ENCODE measurements at regions of chr1 and their contacts with region 1.

Region 1: DNA sequence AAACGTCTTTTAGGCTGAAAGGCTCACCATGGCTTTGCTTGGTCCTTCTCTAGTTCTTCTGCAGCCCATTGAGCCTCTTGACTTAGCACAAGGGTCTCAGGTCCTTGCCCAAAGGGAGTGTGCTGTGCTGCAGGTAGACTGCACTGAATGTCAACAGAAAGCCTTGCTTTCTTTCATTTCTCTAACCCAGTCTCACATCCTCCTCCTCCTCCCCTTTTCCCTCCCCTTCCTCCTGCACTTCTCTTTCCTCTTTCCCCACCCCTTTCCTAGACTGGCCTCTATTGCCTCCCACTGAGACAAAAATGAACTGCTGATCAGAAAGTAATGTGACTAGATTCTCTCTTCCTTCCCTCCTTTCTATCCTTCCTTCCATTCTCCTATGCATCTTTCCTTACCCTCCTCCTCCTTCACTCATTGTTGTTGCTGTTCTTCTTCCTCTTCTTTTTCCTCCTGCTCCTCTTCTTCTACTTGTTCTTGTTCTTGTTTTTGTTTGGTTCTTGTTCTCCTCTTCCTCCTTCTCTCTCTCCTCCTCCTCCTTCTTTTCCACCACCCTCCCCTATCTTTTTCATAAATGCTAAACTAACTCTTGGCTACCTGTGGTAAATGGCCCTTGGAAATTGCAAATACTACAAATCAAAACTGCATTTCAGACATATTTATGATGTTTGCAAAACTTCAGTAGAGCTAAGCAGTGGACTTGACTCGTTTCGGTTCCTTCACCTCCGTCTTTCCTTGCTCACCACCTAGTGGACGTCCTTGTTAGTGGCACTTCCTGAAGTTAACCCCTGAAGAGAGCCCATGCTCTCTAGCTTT is at the start of gene SELL:
- DNase-seq: peak; percentile 83
- H3K4me3 ChIP-seq: peak within 1 kb of the TSS; percentile 56
- H3K27ac ChIP-seq: peak within 1 kb of the TSS; percentile 24
- H3K4me1 ChIP-seq: peaks cover 11% of the 10 kb centered on the region
- CTCF ChIP-seq: peak; percentile 97
- total RNA-seq, gene SELL: 0.16 and 0.46 TPM in 2 replicates

Region 2: DNA sequence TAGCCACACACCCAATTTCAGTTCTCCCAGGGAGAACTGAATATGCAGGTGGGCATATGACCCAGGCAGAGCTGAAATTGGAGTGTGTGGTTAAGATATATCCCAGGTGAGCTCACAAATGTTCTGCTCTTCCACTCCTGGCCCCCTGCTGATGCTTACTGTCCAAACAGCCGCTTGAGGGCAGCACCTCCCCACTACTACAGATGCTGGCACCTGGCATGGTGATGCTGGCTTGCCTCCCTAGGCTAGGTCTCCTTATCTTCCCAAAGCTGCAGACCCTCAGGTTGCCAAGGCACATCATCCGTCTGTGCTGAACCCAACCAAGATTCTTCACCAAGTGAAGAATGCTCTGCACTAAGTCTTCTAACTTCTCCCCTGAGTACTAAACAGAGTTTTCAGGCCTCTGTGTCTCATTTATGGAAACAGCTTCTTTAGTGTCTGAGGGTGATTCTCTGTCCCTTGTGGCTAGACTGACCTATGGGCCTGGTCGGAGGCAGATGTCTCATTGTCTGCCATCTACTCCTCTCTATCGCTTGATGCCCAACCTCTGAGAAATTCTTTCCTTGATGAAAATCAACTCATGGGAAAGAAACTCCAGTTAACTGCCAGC is 1108.1 kb before region 1 on chr1:
- CTCF ChIA-PET with region 1: no interaction called
- POLR2A ChIA-PET with region 1: no interaction called
- intact Hi-C with region 1: loop called (anchors 5 kb)
- DNase-seq: peak; percentile 60
- H3K4me3 ChIP-seq: no peak overlapping the region
- H3K27ac ChIP-seq: no peak overlapping the region
- H3K4me1 ChIP-seq: no peaks in the 10 kb centered on the region
- CTCF ChIP-seq: peak; percentile 85

Region 3: DNA sequence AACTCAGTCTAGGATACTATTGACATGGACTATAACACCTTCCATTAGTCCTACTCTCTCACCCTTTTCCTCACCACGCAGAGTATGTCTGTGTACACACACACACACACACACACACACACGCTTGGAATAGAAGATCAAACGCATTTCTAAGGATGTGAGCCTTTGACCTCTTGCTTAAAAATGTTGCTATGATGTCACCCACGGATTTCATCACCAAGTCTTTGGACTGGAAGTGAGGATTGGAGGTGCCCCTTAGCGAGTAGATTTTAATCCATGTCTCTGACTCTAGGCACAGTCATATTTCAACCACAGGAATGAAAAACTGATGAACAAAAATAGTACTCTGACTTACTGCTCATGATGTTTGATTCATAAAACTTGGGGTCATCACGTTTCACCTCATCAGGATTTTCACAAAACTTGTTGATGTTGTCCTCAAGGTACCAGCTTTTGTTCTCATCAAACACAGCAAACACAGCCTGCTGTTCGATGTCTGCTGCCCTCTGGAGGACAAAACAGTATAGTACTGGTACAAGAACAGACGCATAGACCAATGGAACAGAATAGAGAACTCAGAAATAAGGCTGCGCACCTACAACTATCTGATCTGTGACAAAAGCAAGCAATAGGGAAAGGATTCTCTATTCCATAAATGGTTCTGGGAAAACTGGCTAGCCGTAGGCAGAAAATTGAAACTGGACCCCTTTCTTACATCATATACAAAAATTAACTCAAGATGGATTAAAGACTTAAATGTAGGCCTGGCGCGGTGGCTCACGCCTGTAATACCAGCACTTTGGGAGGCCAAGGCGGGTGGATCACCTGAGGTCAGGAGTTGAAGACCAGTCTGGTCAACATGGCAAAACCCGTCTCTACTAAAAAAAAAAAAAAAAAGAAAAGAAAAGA is 165.3 kb before region 1 on chr1:
- CTCF ChIA-PET with region 1: no interaction called
- POLR2A ChIA-PET with region 1: no interaction called
- intact Hi-C with region 1: loop called (anchors 2 kb)
- DNase-seq: peak; percentile 71
- H3K4me3 ChIP-seq: no peak overlapping the region
- H3K27ac ChIP-seq: no peak overlapping the region
- H3K4me1 ChIP-seq: no peaks in the 10 kb centered on the region
- CTCF ChIP-seq: peak; percentile 84

Region 4: GRCh38 chr1:169601093-169601881 is 110.4 kb before region 1 on chr1:
- CTCF ChIA-PET with region 1: interaction called, 9 read pairs
- POLR2A ChIA-PET with region 1: interaction called, 5 read pairs
- intact Hi-C with region 1: loop called (anchors 1 kb)
- DNase-seq: peak; percentile 43
- H3K4me3 ChIP-seq: no peak overlapping the region
- H3K27ac ChIP-seq: no peak overlapping the region
- H3K4me1 ChIP-seq: no peaks in the 10 kb centered on the region
- CTCF ChIP-seq: peak; percentile 78

Region 5: GRCh38 chr1:169809370-169810095 is 97.9 kb after region 1 on chr1:
- CTCF ChIA-PET with region 1: no interaction called
- POLR2A ChIA-PET with region 1: no interaction called
- intact Hi-C with region 1: loop called (anchors 5 kb)
- DNase-seq: peak; percentile 52
- H3K4me3 ChIP-seq: no peak overlapping the region
- H3K27ac ChIP-seq: no peak overlapping the region
- H3K4me1 ChIP-seq: no peaks in the 10 kb centered on the region
- CTCF ChIP-seq: peak; percentile 89